PC-3 (cell line): ENCODE measurements at regions of chr2 and their contacts with region 1.

Region 1: GRCh38 chr2:28751252-28751955 is at the start of gene PPP1CB:
- DNase-seq: peak; percentile 97
- ATAC-seq: peak; percentile 85
- H3K4me3 ChIP-seq: peak within 1 kb of the TSS; percentile 88
- H3K27ac ChIP-seq: peak within 1 kb of the TSS; percentile 91
- H3K4me1 ChIP-seq: peaks cover 42% of the 10 kb centered on the region
- H3K27me3 ChIP-seq: no peaks in the 10 kb centered on the region
- CTCF ChIP-seq: peak; percentile 23; the same call in 1 of the 2 replicates
- total RNA-seq, gene PPP1CB: 84.2 and 101 TPM in 2 replicates

Region 2: DNA sequence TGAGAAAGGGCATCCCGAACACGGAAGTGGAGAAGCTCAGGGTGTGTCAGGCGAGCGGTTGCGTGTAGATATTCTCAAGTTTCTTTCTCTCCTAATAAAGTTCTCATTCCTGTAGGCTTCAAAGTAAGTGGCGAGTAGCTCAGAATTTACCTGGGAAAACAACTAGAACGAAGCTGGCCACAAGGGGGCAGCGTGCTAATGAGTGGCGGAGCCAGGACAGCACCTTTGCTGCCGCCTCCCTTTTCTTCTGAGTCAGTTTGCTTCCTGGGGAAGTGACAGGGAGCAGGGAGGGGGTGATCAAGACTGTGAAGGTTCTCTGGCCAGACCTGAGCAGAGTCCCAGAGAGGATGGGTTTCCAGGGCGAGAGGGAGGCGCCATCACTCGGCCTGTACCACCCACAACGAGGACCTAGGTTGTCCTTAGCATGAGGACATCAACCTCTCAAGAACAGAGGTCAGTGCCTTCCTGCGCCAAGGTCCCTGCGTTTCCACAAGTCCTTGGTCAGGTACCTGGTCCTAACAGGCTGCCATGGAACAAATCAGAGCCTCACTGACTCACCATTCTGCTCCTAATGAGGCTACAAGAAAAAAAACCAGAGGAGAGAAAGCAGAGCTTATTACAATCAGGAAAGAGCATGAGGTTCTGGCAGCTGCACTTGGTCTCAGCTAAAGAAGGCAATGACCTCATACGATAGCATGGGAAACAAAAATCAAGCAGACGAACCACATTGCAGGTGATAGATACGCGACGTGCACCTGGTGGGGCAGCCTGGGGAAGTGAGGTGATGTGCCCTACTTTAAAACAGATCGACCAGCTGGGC is 156.9 kb before region 1 on chr2:
- CTCF ChIA-PET with region 1: interaction called, 18 read pairs
- POLR2A ChIA-PET with region 1: interaction called, 3 read pairs
- intact Hi-C with region 1: loop called (anchors 1 kb)
- DNase-seq: peak; percentile 99
- ATAC-seq: peak; percentile 96
- H3K4me3 ChIP-seq: no peak overlapping the region
- H3K27ac ChIP-seq: peak overlapping the region; percentile 81
- H3K4me1 ChIP-seq: peaks cover 30% of the 10 kb centered on the region
- H3K27me3 ChIP-seq: no peaks in the 10 kb centered on the region
- CTCF ChIP-seq: peak; percentile 91

Region 3: GRCh38 chr2:28621172-28622100 is 130.0 kb before region 1 on chr2:
- CTCF ChIA-PET with region 1: interaction called, 5 read pairs
- POLR2A ChIA-PET with region 1: no interaction called
- intact Hi-C with region 1: loop called (anchors 1 kb)
- DNase-seq: peak; percentile 92
- ATAC-seq: peak; percentile 98
- H3K4me3 ChIP-seq: peak overlapping the region; percentile 11; the same call in 1 of the 2 replicates
- H3K27ac ChIP-seq: peak overlapping the region; percentile 87
- H3K4me1 ChIP-seq: peaks cover 51% of the 10 kb centered on the region
- H3K27me3 ChIP-seq: no peaks in the 10 kb centered on the region
- CTCF ChIP-seq: peak; percentile 80

Region 4: GRCh38 chr2:28661589-28662001 is 89.8 kb before region 1 on chr2:
- CTCF ChIA-PET with region 1: interaction called, 3 read pairs
- POLR2A ChIA-PET with region 1: interaction called, 3 read pairs
- intact Hi-C with region 1: loop called (anchors 1 kb)
- DNase-seq: peak; percentile 84
- ATAC-seq: peak; percentile 44
- H3K4me3 ChIP-seq: peak overlapping the region; percentile 23; the same call in 1 of the 2 replicates
- H3K27ac ChIP-seq: peak overlapping the region; percentile 88
- H3K4me1 ChIP-seq: peaks cover 52% of the 10 kb centered on the region
- H3K27me3 ChIP-seq: no peaks in the 10 kb centered on the region
- CTCF ChIP-seq: no peak

Region 5: DNA sequence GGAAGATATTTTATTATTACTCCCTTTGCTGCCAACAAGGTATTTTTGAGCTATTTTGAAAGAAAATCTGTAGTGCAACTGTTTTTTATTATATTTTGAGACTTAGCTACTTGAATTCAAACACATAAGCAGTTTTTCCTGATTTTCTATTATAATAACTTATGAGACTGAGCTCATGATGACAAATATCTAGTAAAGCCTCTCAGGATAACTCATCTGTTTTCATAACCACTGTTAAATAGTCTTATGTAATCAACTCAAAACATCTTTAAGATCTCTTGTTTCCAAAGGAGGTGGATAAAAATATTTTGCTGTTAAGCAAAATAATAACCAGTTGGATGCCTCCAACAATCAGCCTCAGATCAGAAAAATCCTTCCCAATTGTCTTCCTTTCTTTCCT is 21.7 kb before region 1 on chr2:
- CTCF ChIA-PET with region 1: no interaction called
- POLR2A ChIA-PET with region 1: interaction called, 8 read pairs
- intact Hi-C with region 1: loop called (anchors 2 kb)
- DNase-seq: peak; percentile 81
- ATAC-seq: peak; percentile 96
- H3K4me3 ChIP-seq: no peak overlapping the region
- H3K27ac ChIP-seq: peak overlapping the region; percentile 46
- H3K4me1 ChIP-seq: peaks cover 25% of the 10 kb centered on the region
- H3K27me3 ChIP-seq: no peaks in the 10 kb centered on the region
- CTCF ChIP-seq: no peak

Region 6: DNA sequence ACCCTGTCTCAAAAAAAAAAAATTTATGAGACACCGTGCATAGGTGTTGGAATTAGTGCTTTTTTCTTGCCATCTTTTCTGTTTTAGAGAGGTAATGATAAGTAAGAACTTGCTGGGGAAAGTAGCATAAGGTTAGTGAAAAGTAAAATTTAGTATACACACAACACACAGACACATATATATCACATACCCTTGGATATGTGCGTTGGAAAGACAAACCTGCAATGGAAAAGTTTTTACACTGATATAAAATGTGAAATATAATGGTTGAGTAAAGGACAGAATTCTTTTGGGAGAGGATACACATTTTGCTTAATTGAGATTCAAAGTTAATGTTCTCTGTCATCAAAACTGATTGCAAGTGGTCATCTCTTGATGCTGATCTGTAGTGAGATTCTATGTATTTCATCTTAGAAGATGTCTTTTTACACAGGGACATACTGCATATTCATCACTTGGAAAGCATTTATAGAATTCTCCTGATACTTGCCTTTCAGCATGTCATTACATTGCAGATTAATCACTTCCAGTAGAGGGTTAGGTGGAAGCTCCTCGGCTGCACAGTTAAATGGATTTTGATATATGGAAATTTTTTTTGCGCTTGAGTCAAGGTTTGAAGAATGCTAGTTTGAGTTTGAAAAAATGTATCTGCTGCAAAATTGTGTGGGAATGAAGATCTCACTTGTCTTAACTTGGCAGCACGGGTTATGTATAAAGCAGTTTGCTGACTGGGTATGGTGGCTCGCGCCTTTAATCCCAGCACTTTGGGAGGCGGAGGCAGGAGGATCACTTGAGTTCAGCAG is 13.7 kb after region 1 on chr2:
- CTCF ChIA-PET with region 1: no interaction called
- POLR2A ChIA-PET with region 1: no interaction called
- intact Hi-C with region 1: no loop called
- DNase-seq: no peak
- ATAC-seq: no peak
- H3K4me3 ChIP-seq: no peak overlapping the region
- H3K27ac ChIP-seq: no peak overlapping the region
- H3K4me1 ChIP-seq: no peaks in the 10 kb centered on the region
- H3K27me3 ChIP-seq: no peaks in the 10 kb centered on the region
- CTCF ChIP-seq: no peak